GM12878 (cell line): ENCODE measurements at regions of chr16 and their contacts with region 1.

Region 1: DNA sequence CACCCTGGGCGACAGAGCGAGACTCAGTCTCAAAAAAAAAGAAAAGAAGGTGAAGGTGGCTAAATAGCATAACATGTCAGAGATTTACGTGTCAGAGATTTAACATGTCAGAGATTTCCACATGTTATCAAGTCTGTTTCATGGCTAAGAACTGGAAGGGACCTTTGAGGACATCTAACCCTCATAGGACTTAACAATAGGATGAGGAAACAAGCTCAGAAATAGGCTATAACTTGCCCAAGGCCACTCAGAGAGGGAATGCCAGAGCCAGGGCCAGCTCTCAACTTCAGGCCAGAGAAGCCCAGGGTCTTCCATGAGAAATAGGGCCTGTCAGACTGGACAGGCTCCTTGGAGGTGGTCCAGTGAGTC is 26.8 kb upstream of the ZNF629 start:
- DNase-seq: peak; percentile 7
- ATAC-seq: no peak; the same call in 2 of the 3 replicates
- H3K4me3 ChIP-seq: peak overlapping the region; percentile 58
- H3K27ac ChIP-seq: peak overlapping the region; percentile 84
- H3K4me1 ChIP-seq: peaks cover 9% of the 10 kb centered on the region
- H3K27me3 ChIP-seq: no peaks in the 10 kb centered on the region
- CTCF ChIP-seq: no peak
- EP300 ChIP-seq: no peak
- POLR2A ChIP-seq: no peak
- RAD21 ChIP-seq: no peak

Region 2: DNA sequence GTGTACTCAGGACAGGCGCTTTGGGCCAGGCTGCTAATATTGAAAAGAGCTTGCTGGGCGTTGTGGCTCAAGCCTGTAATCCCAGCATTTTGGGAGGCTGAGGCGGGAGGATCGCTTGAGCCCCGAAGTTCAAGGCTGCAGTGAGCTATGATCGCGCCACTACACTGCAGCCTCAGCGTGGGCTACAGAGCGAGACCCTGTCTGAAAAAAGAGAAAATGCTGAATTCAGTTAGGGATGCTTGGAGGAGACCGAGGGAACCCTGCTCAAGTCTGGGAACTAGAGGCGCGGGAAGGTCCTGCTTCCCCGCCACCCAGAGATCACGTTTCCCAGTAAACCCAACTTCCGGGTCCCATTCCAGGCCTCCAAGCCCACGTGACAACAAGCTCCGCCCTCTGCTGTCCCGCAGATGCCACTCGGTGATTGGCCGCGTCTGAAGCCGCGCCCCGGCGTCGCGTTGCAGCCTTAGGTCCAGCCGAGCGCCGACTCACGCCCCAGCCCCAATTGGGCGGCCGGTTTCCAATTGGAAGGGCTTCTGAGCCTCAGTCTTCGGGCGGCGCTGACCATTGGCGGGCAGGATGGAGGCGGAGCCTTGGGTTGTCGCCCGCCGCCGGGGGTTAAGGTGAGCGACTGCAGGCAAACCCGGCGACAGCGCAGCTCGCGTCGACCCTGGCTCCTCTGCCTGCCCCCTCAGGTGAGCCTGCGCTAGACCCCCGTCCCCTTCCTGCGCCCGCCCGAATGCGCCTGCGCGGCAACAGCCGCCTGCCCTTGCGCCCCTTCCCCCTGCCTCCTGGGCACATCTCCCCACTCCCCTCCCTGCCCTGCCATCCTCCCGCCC is 65.8 kb before region 1 on chr16 and contains the start of gene PHKG2:
- CTCF ChIA-PET with region 1: interaction called, 9 read pairs
- POLR2A ChIA-PET with region 1: interaction called, 3 read pairs
- RAD21 ChIA-PET with region 1: interaction called, 6 read pairs
- SMC1A ChIA-PET with region 1: no interaction called
- in situ Hi-C with region 1: no loop called
- intact Hi-C with region 1: loop called (anchors 2 kb)
- DNase-seq: peak; percentile 96
- ATAC-seq: peak; percentile 100
- H3K4me3 ChIP-seq: peak within 1 kb of the TSS; percentile 89
- H3K27ac ChIP-seq: peak within 1 kb of the TSS; percentile 71
- H3K4me1 ChIP-seq: peaks cover 9% of the 10 kb centered on the region
- H3K27me3 ChIP-seq: no peaks in the 10 kb centered on the region
- CTCF ChIP-seq: no peak
- EP300 ChIP-seq: no peak
- POLR2A ChIP-seq: peak; percentile 94
- RAD21 ChIP-seq: no peak
- polyA plus RNA-seq, gene PHKG2: 5.2 to 8.8 TPM

Region 3: DNA sequence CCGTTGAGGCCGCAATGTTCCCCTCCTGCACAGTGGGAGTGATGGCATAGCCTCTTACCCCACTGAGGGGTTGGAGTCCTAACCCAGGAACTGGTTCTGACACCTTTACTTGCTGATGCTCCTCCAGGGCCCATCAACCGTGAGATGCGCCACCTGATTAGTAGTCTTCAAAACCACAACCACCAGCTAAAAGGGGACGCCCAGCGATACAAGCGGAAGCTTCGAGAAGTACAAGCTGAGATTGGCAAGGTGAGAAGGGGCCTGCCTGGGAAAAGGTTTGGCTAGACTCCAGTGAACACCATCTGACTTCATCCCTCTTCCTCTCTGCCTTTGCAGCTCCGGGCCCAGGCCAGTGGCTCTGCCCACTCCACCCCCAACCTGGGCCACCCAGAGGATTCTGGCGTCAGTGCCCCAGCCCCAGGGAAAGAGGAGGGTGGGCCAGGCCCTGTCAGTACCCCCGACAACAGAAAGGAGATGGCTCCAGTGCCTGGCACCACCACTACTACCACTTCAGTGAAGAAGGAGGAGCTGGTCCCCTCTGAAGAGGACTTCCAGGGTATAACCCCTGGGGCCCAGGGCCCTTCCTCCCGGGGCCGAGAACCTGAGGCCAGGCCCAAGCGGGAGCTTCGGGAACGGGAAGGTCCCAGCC is 45.9 kb before region 1 on chr16:
- CTCF ChIA-PET with region 1: interaction called, 13 read pairs
- POLR2A ChIA-PET with region 1: interaction called, 6 read pairs
- RAD21 ChIA-PET with region 1: no interaction called
- SMC1A ChIA-PET with region 1: no interaction called
- in situ Hi-C with region 1: no loop called
- intact Hi-C with region 1: no loop called
- DNase-seq: no peak
- ATAC-seq: peak; percentile 74
- H3K4me3 ChIP-seq: no peak overlapping the region
- H3K27ac ChIP-seq: no peak overlapping the region
- H3K4me1 ChIP-seq: peaks cover 6% of the 10 kb centered on the region
- H3K27me3 ChIP-seq: no peaks in the 10 kb centered on the region
- CTCF ChIP-seq: no peak
- EP300 ChIP-seq: no peak
- POLR2A ChIP-seq: no peak
- RAD21 ChIP-seq: no peak